ENCODE measurements at regions of chr6 and their contacts with region 1.

Region 1: DNA sequence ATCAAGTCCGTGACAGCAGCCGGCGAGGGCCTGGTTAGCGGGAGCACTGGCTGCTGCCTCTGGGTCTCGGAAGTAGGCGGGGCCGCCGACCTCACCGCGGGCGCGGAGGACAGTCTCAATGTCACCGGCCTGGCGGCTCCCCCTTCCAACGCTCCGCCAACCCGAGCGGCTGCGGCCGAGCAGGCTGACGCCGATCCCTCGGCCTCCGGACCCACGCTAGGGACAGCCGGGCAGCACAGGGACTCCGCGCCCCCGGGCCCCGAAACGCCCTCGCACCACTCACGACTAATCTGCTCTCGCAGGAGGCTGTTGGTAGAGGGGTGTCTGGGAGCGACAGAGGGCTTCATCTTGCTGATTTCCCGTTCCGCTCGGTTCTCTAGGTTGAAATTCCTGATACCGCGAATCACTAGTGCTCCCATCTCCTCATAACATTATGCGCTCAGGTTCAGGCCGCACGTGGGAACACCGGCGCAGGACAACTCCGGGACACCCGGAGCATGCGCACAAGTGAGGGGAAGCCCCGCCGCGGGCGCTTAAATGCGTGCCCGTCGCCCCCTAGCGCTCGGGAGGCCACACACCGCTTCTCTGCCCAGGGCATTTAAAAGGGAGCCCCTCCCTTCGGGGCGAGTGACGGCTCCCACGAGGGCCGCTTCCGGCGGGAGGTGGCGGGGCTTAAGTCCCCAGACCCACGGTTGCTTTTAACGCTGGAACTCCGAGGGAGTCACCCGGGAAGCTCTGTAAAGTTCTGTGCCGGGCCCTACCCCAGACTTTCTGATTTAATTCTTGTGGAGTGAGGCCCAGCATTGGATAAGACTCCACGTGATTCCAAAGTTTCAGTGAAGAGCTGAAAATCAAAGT is at the start of gene NDUFAF4:
- DNase-seq: peak; percentile 93
- CTCF ChIP-seq: peak; percentile 86

Region 2: GRCh38 chr6:96626759-96627364 is 270.8 kb before region 1 on chr6:
- CTCF ChIA-PET with region 1: interaction called, 13 read pairs
- POLR2A ChIA-PET with region 1: no interaction called
- DNase-seq: peak; percentile 36
- CTCF ChIP-seq: peak; percentile 12

Region 3: GRCh38 chr6:96760153-96760687 is 137.4 kb before region 1 on chr6:
- CTCF ChIA-PET with region 1: no interaction called
- POLR2A ChIA-PET with region 1: no interaction called
- DNase-seq: peak; percentile 12
- CTCF ChIP-seq: no peak

Region 4: GRCh38 chr6:96853083-96853482 is 44.5 kb before region 1 on chr6:
- CTCF ChIA-PET with region 1: no interaction called
- POLR2A ChIA-PET with region 1: no interaction called
- DNase-seq: no peak
- CTCF ChIP-seq: no peak

Region 5: DNA sequence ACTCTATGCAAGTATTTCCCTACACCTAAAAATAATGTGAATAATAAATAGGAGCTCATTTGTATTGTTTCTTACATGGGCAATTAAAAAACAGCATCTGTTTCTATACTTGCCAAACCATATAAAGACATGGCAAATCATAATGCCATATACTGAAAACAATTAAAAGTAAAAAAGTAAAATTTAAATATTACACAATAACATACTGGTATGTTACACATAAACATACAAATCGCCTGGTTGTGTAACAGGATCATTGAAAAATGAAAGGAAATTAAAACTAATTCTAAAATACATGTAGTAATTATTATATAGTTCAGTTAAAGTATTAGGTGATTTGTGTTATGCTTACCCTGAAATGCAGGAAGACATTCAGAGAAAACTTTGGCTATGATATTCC is 11.1 kb before region 1 on chr6:
- CTCF ChIA-PET with region 1: interaction called, 14 read pairs
- POLR2A ChIA-PET with region 1: no interaction called
- DNase-seq: no peak
- CTCF ChIP-seq: no peak

Region 6: DNA sequence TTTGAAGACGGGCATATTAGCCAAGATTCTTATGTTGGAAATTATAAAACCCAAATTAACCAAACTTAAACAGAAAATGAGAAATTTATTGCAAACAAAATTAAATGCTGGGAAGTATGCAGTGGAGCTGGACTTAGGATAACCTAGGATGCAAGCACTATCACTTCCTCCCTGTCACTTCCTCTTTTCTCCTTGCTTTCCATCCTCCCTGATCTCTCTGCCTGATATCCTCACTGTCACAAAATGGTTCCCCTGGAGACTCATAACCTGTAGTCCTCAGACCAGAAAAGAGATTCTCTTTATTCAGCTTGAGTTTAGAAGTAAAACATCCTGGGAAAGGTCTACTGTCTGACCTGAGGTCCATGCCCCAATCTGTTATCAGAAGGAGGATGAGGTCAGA is 19.5 kb after region 1 on chr6:
- CTCF ChIA-PET with region 1: interaction called, 34 read pairs
- POLR2A ChIA-PET with region 1: no interaction called
- DNase-seq: no peak
- CTCF ChIP-seq: no peak

Region 7: GRCh38 chr6:96923871-96924493 is 26.4 kb after region 1 on chr6:
- CTCF ChIA-PET with region 1: interaction called, 21 read pairs
- POLR2A ChIA-PET with region 1: no interaction called
- DNase-seq: no peak
- CTCF ChIP-seq: no peak

Region 8: GRCh38 chr6:97059473-97059872 is 161.9 kb after region 1 on chr6:
- CTCF ChIA-PET with region 1: interaction called, 35 read pairs
- POLR2A ChIA-PET with region 1: no interaction called
- DNase-seq: peak; percentile 68
- CTCF ChIP-seq: peak; percentile 44

Measured in GM10248 (cell line).